ENCODE measurements at regions of chr12 and their contacts with region 1.

Region 1: DNA sequence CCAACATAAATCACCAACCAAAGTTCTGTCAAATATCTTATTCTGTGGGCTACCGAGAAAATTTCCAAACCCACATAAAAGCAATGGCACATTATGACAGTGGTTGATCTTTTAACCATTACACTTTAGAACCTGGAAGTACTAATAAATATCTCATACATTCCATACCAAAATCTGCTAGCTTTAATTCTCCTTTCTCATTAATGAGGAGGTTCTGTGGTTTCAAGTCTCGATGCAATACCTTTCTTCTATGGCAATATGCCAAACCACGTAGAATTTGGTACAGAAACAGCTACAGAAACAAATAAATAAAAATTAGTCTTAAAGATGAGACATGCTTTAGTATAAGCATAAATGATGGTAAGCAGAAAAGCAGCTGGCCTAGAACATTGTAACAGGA is 100.7 kb downstream of the ELK3 start:
- DNase-seq: no peak
- H3K27ac ChIP-seq: no peak overlapping the region
- CTCF ChIP-seq: no peak

Region 2: DNA sequence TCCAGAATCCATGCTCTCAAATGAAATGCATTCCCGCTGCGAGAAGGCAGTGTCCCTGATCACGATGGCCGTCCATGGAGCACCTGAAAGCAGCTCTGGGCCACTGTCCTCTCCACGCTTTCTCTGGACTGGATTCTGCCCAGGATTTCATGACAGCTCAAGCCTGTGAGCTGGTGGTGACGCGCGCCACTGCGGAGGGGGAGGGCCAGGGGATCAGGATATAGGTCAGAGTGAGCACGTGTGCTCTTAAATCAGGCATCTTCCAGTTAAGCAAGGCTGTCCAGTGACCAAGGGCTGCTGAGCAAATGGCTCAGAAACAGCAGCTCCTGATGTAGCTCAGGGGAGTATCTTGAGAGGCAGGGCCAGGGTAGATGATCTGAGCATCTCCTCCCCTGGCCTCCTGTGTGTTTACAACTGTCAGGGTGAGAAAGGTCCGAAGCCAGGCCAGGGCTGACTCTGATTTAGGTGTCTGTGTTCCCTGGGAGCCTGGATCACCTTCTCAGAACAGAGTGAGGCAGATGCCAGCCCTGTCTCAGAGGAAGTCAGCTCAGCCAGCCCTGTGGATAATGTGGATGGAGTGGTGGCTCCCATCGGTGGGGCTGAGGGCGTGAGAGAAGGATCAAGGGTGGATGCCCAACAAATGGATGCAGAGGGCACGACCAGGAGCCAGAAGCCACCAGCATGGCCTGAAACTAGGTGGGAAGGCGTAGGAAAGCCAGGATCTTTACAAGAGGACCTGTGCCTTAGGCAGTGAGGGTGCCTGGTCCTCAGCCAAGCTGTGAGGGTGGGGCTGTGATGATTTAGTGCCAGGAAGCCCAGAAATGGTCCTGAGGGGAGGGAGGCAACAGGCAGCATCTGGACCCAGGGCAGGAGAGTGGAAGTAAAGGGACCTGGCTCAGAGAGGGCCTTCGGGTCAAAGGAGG is 45.4 kb before region 1 on chr12:
- CTCF ChIA-PET with region 1: no interaction called
- POLR2A ChIA-PET with region 1: no interaction called
- DNase-seq: no peak
- H3K27ac ChIP-seq: peak overlapping the region; percentile 58
- CTCF ChIP-seq: no peak

Region 3: GRCh38 chr12:96471368-96472050 is 176.7 kb after region 1 on chr12:
- CTCF ChIA-PET with region 1: no interaction called
- POLR2A ChIA-PET with region 1: no interaction called
- DNase-seq: no peak
- H3K27ac ChIP-seq: no peak overlapping the region
- CTCF ChIP-seq: no peak

Region 4: DNA sequence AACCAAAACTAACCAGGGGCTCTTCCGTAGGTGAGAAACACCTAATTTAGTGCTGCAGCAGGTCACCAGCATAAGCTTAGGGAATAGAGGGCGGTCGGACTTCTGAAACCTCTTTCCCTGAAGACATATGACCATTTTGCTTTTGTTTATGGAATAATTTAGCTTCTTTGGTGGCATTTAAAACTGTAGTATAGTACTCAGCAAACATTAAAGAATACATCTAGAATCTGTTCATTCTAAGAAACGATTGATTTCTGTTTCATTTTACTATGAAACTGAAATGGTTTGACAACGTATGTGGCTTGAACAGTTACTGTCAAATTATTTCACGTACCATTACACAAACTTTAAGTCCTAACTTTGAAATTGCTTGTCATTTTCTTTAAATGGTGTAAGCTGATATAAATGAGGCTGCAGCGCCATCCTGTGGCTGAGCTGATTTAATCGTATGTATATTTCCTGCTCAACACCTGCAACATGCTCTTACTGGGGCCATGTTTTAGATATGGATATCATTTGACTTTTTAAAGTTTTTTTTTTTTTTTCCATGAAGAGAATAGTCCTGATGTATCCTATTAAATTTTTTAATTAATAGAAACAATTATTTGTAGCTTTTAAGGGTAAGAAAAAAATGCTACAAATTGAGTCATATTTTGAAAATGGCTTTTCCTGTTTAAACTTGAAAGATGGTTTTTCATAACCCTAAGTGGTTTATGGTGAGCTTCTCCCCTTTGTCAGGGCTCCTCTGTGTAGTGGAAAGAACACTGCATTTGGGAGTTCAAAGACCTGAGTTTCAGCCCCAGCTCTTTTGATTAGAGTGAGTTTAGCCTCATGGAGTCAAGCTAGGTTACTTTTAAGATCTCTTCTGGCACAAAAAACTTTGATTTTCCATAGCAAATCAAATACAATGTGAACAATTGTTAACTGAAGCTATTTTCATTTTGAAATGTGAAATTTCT is 221.9 kb after region 1 on chr12:
- CTCF ChIA-PET with region 1: interaction called, 3 read pairs
- POLR2A ChIA-PET with region 1: interaction called, 11 read pairs
- DNase-seq: peak; percentile 38
- H3K27ac ChIP-seq: no peak overlapping the region
- CTCF ChIP-seq: peak; percentile 70

Region 5: GRCh38 chr12:97017213-97017612 is 722.4 kb after region 1 on chr12:
- CTCF ChIA-PET with region 1: no interaction called
- POLR2A ChIA-PET with region 1: no interaction called
- DNase-seq: no peak
- H3K27ac ChIP-seq: no peak overlapping the region
- CTCF ChIP-seq: no peak